Right ventricle myocardium superior (tissue), 1 donor: ENCODE measurements at regions of chr5 and their contacts with region 1.

Region 1: GRCh38 chr5:99032234-99033013 is 103.6 kb upstream of the CHD1 start:
- DNase-seq: peak; percentile 47
- ATAC-seq: peak; percentile 83

Region 2: DNA sequence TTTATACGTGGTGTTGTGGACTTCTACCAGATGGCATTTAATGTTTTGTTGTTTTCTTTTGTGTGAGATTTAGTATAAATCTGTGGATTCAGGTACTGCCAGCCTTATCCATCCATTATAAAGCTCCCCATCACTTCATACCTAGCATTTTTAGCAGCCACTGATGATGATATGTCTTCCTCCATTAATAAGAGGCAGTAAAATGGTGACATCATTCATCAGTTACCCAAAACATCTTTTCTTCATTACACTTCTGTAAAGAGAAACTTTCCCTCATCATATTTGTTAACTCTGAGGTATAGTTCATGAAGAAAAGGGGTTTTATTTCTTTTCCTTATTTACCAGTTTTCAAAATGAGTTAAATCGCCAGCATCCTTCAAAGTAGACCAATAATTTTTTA is 123.1 kb before region 1 on chr5:
- intact Hi-C with region 1: loop called (anchors 2 kb)
- DNase-seq: no peak
- ATAC-seq: no peak